Naive thymus-derived CD4-positive, alpha-beta T cell (primary cell): ENCODE measurements at regions of chr3 and their contacts with region 1.

Region 1: GRCh38 chr3:153161138-153161713 is 800 bp upstream of the RAP2B start:
- DNase-seq: peak; percentile 66 to 95 (median 93)
- ATAC-seq: peak; percentile 85
- H3K4me3 ChIP-seq: peak overlapping the region; percentile 97
- H3K4me3 Mint-ChIP-seq: peak overlapping the region; percentile 95 to 100 (median 98)
- H3K27ac ChIP-seq: peak overlapping the region; percentile 81
- H3K27ac Mint-ChIP-seq: peak overlapping the region; percentile 89 to 98 (median 92)
- H3K4me1 ChIP-seq: peaks cover 7 to 22% of the 10 kb centered on the region in 2 donors
- H3K4me1 Mint-ChIP-seq: peaks cover 28 to 40% (median 34%) of the 10 kb centered on the region in 7 donors
- H3K27me3 ChIP-seq: no peaks in the 10 kb centered on the region
- H3K27me3 Mint-ChIP-seq: no peaks in the 10 kb centered on the region

Region 2: GRCh38 chr3:153043729-153044328 is 117.4 kb before region 1 on chr3:
- CTCF ChIA-PET with region 1: interaction called, 7 read pairs
- POLR2A ChIA-PET with region 1: interaction called, 3 read pairs
- intact Hi-C with region 1: loop called (anchors 1 kb)
- DNase-seq: no peak
- ATAC-seq: no peak
- H3K4me3 ChIP-seq: no peak overlapping the region
- H3K4me3 Mint-ChIP-seq: no peak overlapping the region
- H3K27ac ChIP-seq: no peak overlapping the region
- H3K27ac Mint-ChIP-seq: no peak overlapping the region
- H3K4me1 ChIP-seq: no peaks in the 10 kb centered on the region
- H3K4me1 Mint-ChIP-seq: peaks cover 0 to 10% (median 2%) of the 10 kb centered on the region in 7 donors
- H3K27me3 ChIP-seq: no peaks in the 10 kb centered on the region
- H3K27me3 Mint-ChIP-seq: peaks cover 0 to 8% (median 0%) of the 10 kb centered on the region in 5 donors

Region 3: GRCh38 chr3:153209596-153209995 is 48.4 kb after region 1 on chr3:
- CTCF ChIA-PET with region 1: interaction called, 5 read pairs
- POLR2A ChIA-PET with region 1: interaction called, 7 read pairs
- intact Hi-C with region 1: loop called (anchors 1 to 2 kb)
- DNase-seq: no peak
- ATAC-seq: peak; percentile 85
- H3K4me3 ChIP-seq: no peak overlapping the region
- H3K4me3 Mint-ChIP-seq: peak overlapping the region in 9 of 10 donors; percentile 20 to 80 (median 72)
- H3K27ac ChIP-seq: no peak overlapping the region
- H3K27ac Mint-ChIP-seq: peak overlapping the region in 7 of 9 donors; percentile 0 to 87 (median 71)
- H3K4me1 ChIP-seq: peaks cover 6 to 14% of the 10 kb centered on the region in 2 donors
- H3K4me1 Mint-ChIP-seq: peaks cover 15 to 60% (median 45%) of the 10 kb centered on the region in 7 donors
- H3K27me3 ChIP-seq: no peaks in the 10 kb centered on the region
- H3K27me3 Mint-ChIP-seq: peaks cover 0 to 1% (median 0%) of the 10 kb centered on the region in 5 donors

Region 4: DNA sequence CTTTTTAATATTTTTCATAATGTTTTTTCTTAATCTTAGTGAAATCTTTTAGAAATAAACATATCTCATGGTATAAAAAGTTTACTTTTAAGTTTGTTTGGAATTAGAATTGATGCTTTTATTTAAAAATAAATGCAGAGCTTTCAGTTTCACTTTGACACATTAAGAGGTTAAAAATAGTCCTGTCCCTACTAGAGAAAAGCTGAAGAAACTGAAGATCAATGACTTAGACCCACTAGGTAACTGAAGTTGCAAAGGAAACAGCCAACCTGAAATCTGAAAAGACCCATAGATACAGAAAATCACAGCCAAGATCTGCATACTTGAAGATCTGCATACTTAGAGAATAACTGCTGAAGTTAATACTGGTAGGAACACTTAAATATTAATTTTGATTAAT is 238.4 kb after region 1 on chr3:
- CTCF ChIA-PET with region 1: no interaction called
- POLR2A ChIA-PET with region 1: no interaction called
- intact Hi-C with region 1: loop called in 1 of 2 experiments (anchors 5 kb)
- DNase-seq: no peak
- ATAC-seq: no peak
- H3K4me3 ChIP-seq: no peak overlapping the region
- H3K4me3 Mint-ChIP-seq: peak overlapping the region in 9 of 10 donors; percentile 20 to 58 (median 51)
- H3K27ac ChIP-seq: no peak overlapping the region
- H3K27ac Mint-ChIP-seq: peak overlapping the region in 7 of 9 donors; percentile 6 to 79 (median 21)
- H3K4me1 ChIP-seq: no peaks in the 10 kb centered on the region
- H3K4me1 Mint-ChIP-seq: peaks cover 11 to 34% (median 29%) of the 10 kb centered on the region in 7 donors
- H3K27me3 ChIP-seq: no peaks in the 10 kb centered on the region
- H3K27me3 Mint-ChIP-seq: no peaks in the 10 kb centered on the region

Region 5: GRCh38 chr3:153595186-153595815 is 434.1 kb after region 1 on chr3:
- CTCF ChIA-PET with region 1: interaction called, 3 read pairs
- POLR2A ChIA-PET with region 1: no interaction called
- intact Hi-C with region 1: loop called (anchors 1 to 2 kb)
- DNase-seq: peak in 5 of 9 donors; percentile 1 to 25 (median 11)
- ATAC-seq: peak; percentile 45
- H3K4me3 ChIP-seq: no peak overlapping the region
- H3K4me3 Mint-ChIP-seq: no peak overlapping the region
- H3K27ac ChIP-seq: no peak overlapping the region
- H3K27ac Mint-ChIP-seq: no peak overlapping the region
- H3K4me1 ChIP-seq: no peaks in the 10 kb centered on the region
- H3K4me1 Mint-ChIP-seq: peaks cover 0 to 15% (median 6%) of the 10 kb centered on the region in 7 donors
- H3K27me3 ChIP-seq: no peaks in the 10 kb centered on the region
- H3K27me3 Mint-ChIP-seq: no peaks in the 10 kb centered on the region

Region 6: GRCh38 chr3:153768561-153769469 is 607.6 kb after region 1 on chr3:
- CTCF ChIA-PET with region 1: interaction called, 4 read pairs
- POLR2A ChIA-PET with region 1: no interaction called
- intact Hi-C with region 1: loop called (anchors 1 kb)
- DNase-seq: peak; percentile 12 to 67 (median 59)
- ATAC-seq: peak; percentile 96
- H3K4me3 ChIP-seq: no peak overlapping the region
- H3K4me3 Mint-ChIP-seq: no peak overlapping the region
- H3K27ac ChIP-seq: no peak overlapping the region
- H3K27ac Mint-ChIP-seq: peak overlapping the region in 1 of 9 donors; percentile 74
- H3K4me1 ChIP-seq: no peaks in the 10 kb centered on the region
- H3K4me1 Mint-ChIP-seq: peaks cover 0 to 12% (median 0%) of the 10 kb centered on the region in 7 donors
- H3K27me3 ChIP-seq: no peaks in the 10 kb centered on the region
- H3K27me3 Mint-ChIP-seq: peaks cover 6 to 28% (median 11%) of the 10 kb centered on the region in 5 donors

Region 7: DNA sequence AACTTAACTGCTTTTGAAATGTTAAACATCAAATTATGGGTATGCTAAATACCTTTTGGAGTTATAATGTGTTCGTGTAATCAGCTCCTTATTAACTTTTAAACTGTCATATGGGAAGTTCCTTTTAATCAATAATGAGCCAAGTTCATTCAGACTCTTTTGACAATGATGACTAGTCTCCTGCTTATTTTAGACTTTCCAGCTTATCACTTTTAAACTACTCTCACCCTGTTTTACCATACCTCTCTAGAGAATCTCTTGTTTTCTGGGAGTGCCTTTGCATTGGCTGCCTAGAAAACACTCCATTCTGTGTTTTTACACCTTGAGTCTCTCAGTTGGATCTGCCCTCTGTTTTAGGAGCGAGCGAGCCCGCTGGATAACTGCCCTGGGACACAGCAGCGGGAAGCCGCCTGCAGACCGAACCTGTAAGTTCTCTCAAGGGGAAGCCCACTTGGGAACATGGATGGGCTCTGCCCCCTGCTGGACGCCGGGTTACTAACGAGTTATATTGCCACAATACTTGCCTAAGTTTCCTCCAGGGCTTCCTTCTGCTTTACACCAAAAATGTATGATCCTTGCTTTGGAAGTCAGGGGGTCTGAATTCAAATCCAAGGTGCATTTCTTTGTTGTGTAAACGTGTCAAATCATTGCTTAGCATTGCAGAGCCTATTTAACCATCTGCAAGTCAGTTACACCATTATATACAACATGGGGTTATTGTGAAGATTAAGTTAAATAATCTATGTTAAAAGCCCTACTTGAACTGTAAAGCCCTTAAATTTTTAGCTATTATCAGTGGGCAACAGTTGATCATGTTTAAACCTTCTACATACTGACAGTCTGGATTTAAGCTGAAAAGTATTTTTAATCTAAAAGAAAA is 1091.8 kb after region 1 on chr3:
- CTCF ChIA-PET with region 1: no interaction called
- POLR2A ChIA-PET with region 1: no interaction called
- intact Hi-C with region 1: loop called in 1 of 2 experiments (anchors 5 kb)
- DNase-seq: peak; percentile 16 to 67 (median 49)
- ATAC-seq: peak; percentile 84
- H3K4me3 ChIP-seq: no peak overlapping the region
- H3K4me3 Mint-ChIP-seq: no peak overlapping the region
- H3K27ac ChIP-seq: no peak overlapping the region
- H3K27ac Mint-ChIP-seq: peak overlapping the region in 1 of 9 donors; percentile 48
- H3K4me1 ChIP-seq: no peaks in the 10 kb centered on the region
- H3K4me1 Mint-ChIP-seq: peaks cover 0 to 5% (median 0%) of the 10 kb centered on the region in 7 donors
- H3K27me3 ChIP-seq: no peaks in the 10 kb centered on the region
- H3K27me3 Mint-ChIP-seq: no peaks in the 10 kb centered on the region

Region 8: DNA sequence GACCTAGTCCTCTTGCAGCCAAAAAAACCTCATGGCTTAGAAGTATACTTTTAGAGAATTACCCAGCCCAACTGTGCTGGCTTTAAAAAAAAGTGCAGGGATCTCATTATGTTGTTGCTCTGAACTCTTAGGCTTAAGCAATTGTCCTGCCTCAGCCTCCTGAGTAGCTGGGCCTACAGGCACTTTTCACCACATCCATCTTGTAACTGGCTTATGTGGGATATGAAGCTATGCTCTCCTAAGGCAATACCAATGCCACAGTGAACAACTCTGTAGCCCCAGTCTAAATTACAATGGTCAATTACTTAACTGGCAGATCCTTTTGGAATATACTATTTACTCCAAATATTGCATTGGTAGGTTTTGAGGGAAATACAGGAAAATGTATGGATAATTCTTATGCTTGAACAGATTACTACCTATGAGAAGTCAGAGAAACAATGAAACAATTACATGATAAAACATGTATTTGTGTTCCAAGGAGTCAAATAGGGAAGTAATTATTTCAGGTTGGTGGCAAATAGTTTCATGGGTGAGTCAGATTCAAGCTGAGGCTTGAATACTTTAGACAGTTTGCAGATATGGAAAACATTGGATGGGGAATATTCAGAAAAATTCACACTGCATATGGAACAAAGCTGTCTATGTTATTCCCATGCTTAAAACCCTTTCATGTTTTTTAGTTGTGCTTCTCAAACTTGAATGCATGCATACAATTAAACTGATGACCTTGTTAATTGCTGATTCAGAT is 1303.4 kb after region 1 on chr3:
- CTCF ChIA-PET with region 1: no interaction called
- POLR2A ChIA-PET with region 1: no interaction called
- intact Hi-C with region 1: no loop called
- DNase-seq: no peak
- ATAC-seq: no peak
- H3K4me3 ChIP-seq: no peak overlapping the region
- H3K4me3 Mint-ChIP-seq: no peak overlapping the region
- H3K27ac ChIP-seq: no peak overlapping the region
- H3K27ac Mint-ChIP-seq: no peak overlapping the region
- H3K4me1 ChIP-seq: no peaks in the 10 kb centered on the region
- H3K4me1 Mint-ChIP-seq: no peaks in the 10 kb centered on the region
- H3K27me3 ChIP-seq: no peaks in the 10 kb centered on the region
- H3K27me3 Mint-ChIP-seq: peaks cover 0 to 5% (median 0%) of the 10 kb centered on the region in 5 donors